MCF 10A (cell line): ENCODE measurements at regions of chr15 and their contacts with region 1.

Region 1: DNA sequence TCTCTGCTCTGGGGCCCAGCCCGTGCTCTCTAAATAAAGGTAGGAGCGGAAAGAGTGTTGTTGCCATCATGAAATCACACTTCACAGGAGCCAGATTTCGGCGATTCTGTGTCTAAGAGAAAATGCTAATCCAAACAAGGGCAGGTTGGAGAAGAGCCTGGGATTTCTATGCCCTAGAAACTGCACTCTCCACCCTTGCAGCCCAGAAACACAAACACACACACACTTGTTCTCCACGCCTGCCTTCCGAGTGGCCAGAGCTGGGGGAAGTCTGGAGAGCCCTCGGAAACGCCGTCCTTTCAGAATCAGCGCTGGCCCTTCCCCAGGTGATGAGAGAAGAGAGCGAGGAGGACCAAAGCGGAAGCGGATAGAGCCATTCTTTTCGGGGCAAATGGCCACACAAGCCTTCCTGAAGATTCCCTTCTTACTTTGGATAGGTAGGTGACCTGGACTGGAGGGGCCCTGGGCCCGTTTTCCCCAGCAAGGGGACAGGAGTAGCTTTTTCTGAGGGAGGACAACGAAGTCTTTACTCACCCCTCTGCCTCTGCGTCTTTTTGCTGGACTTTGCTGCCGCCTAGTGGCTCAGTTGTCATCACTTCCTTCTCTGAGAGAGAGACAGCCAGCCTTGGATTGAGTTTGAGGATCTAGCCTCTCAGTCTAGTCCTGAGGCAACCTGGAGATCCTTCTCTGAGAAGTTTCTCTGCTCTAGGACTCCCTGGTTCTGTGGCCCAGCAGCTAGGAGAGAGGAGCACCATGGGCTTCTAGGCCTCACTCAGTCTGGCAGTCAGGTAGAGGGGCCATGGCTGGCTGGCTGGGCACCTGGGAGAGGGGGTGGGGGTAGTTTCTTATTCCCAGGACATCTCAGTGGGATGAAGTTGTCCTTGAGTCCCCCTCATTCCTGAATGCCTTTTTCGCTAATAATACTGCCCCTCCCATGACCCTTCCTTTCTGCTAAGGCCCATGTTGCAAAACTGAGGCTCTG is 37.7 kb downstream of the SENP8 start:
- DNase-seq: peak; percentile 89
- H3K4me3 Mint-ChIP-seq: peak overlapping the region; percentile 71
- H3K27ac Mint-ChIP-seq: peak overlapping the region; percentile 53
- H3K4me1 Mint-ChIP-seq: peaks cover 21% of the 10 kb centered on the region
- H3K27me3 Mint-ChIP-seq: no peaks in the 10 kb centered on the region
- CTCF ChIP-seq: peak; percentile 82

Region 2: DNA sequence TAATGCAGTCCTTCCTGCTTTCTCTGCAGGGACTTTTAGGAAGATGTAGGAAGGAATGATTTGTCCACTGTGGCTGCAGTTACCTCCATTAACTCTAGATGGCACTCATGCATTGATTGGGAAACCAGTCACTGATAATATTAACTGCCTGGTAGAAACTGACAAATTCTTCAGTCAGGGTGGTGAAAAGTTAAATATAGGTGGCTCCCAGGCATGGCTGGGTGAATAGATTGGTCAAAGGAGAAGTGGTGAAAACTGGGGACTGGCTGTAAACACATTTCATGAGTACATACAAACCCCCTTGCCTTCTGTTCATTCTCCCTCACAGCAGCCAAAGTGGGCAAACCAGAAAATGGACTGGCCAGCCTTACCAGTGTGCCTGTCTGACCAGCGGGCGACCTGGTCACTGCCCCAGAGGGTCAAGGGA is 707.2 kb before region 1 on chr15:
- CTCF ChIA-PET with region 1: interaction called, 4 read pairs
- POLR2A ChIA-PET with region 1: no interaction called
- intact Hi-C with region 1: loop called (anchors 5 kb)
- DNase-seq: peak; percentile 79
- H3K4me3 Mint-ChIP-seq: no peak overlapping the region
- H3K27ac Mint-ChIP-seq: peak overlapping the region; percentile 39
- H3K4me1 Mint-ChIP-seq: no peaks in the 10 kb centered on the region
- H3K27me3 Mint-ChIP-seq: no peaks in the 10 kb centered on the region
- CTCF ChIP-seq: peak; percentile 86

Region 3: DNA sequence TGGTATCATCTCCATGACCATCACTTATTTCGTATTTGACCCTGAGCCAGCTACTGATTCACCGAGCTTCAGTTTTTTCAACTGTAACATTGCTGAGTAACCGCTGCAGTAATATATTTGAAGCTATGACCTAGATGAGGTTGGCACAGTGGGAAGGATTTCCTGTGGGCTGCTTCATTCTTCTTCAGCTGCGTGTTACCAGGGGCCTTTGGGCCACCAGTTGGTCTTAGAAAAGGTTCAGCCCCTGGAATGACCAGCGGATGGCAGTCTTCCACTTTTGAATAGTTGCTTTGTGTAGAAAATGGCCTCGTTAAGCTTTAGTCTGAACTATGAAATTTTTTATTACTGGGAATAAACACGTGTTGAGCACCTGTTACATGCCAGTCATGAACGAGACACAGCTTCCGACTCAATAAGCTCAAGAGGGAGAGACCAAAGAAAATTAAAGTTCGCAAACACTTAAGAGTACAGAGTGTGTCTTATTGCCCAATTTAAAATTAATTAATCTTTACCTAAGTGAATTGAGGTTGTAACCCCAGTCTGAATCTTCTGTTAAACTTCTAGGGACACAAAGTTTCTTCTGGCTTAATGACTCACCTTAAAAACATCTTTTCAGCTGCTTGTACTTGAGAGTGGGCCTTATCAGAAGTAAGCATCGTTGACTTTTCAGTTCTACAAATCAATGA is 403.2 kb before region 1 on chr15:
- CTCF ChIA-PET with region 1: interaction called, 5 read pairs
- POLR2A ChIA-PET with region 1: no interaction called
- intact Hi-C with region 1: loop called (anchors 1 kb)
- DNase-seq: peak; percentile 91
- H3K4me3 Mint-ChIP-seq: peak overlapping the region; percentile 33
- H3K27ac Mint-ChIP-seq: peak overlapping the region; percentile 84
- H3K4me1 Mint-ChIP-seq: peaks cover 25% of the 10 kb centered on the region
- H3K27me3 Mint-ChIP-seq: no peaks in the 10 kb centered on the region
- CTCF ChIP-seq: peak; percentile 28

Region 4: DNA sequence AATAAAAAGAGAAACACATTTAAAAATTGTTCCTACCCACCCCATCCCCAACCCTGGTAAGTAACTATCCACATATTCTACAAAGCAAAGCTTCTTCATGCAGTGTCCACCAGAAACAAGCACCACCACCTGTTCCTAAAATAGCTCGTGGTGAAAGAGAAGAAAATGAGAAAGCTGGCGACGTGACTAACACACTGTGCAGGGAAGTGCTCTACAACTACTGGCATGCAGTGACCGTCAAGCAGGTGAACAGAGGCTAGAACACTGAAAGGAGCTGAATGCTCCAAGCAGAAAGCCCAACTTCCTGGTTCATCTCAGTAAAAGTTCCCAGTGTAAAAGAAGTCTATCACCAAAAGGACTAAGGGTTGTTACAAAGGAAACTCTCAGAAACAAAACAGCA is 264.9 kb before region 1 on chr15:
- CTCF ChIA-PET with region 1: interaction called, 4 read pairs
- POLR2A ChIA-PET with region 1: no interaction called
- intact Hi-C with region 1: loop called (anchors 10 kb)
- DNase-seq: no peak
- H3K4me3 Mint-ChIP-seq: no peak overlapping the region
- H3K27ac Mint-ChIP-seq: no peak overlapping the region
- H3K4me1 Mint-ChIP-seq: no peaks in the 10 kb centered on the region
- H3K27me3 Mint-ChIP-seq: no peaks in the 10 kb centered on the region
- CTCF ChIP-seq: no peak